ENCODE measurements at regions of chr4 and their contacts with region 1.

Region 1: DNA sequence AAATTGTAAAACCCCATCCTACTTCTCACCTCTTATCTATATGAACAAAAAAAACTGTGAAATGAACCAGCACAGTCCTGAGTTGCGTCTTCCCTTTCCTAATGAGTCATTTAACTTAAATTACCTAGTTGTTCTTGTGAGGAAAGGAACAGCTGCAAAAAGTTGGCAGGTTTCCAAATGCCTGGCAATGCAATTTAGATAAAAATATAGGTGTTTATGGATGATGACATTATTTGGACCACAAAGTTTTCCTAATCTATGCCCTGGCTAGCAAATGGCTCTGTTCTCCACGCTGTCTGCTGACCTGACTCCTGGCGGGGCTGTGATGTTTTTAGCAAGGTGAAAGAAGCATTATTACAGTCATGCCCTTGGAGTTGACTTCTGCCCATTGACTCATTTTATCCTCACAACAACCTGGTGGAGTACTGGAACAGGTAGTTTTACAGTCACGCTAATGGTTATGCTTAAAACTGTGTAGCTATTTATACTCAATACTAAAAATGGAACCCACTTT is 29.8 kb upstream of the RELL1 start:
- DNase-seq: peak; percentile 74
- H3K4me3 ChIP-seq: no peak overlapping the region
- H3K27ac ChIP-seq: no peak overlapping the region
- H3K4me1 ChIP-seq: peaks cover 31% of the 10 kb centered on the region
- H3K27me3 ChIP-seq: no peaks in the 10 kb centered on the region
- CTCF ChIP-seq: peak in 1 of 2 donors; percentile 1

Region 2: DNA sequence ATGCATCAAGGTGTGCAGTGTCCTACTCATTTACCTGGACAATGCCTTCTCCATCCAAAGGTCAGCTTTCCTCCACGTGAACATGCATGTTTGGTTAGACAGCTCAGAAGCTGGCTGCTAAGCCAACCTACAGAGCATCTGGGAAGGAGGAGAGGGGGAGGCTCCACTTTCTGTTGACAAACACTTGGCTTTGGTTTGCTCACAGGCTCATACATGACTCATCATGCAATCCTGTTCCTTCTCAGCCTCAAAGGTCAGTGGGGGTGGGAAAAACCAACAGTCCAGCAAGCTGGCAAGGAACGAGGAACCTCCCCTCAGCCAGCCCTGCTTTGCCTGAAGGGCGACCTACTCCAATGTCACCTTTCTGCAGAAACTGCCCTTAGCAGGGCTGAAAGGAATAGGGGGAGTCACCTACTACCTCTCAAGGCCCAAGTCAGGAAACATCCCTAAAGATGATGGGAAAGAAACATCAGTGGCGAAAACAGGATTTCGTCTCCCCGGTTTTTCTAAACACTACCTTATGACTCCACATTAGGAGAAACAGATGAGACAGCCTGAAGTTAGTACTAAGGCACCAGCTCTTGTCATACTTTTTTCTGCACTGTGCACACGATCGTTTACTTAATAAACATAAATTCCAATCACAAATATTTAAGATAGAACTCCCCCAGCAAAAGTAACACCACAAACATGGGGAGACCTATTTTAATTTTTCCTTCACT is 67.7 kb before region 1 on chr4:
- CTCF ChIA-PET with region 1: no interaction called
- dilution Hi-C with region 1: no loop called
- in situ Hi-C with region 1: no loop called
- intact Hi-C with region 1: no loop called
- DNase-seq: peak; percentile 87
- H3K4me3 ChIP-seq: no peak overlapping the region
- H3K27ac ChIP-seq: no peak overlapping the region
- H3K4me1 ChIP-seq: peaks cover 13% of the 10 kb centered on the region
- H3K27me3 ChIP-seq: no peaks in the 10 kb centered on the region
- CTCF ChIP-seq: no peak

Region 3: GRCh38 chr4:37762294-37762990 is 46.5 kb after region 1 on chr4:
- CTCF ChIA-PET with region 1: no interaction called
- dilution Hi-C with region 1: no loop called
- in situ Hi-C with region 1: no loop called
- intact Hi-C with region 1: loop called (anchors 2 kb)
- DNase-seq: peak; percentile 79
- H3K4me3 ChIP-seq: no peak overlapping the region
- H3K27ac ChIP-seq: peak overlapping the region; percentile 61
- H3K4me1 ChIP-seq: peaks cover 13% of the 10 kb centered on the region
- H3K27me3 ChIP-seq: no peaks in the 10 kb centered on the region
- CTCF ChIP-seq: no peak

Measured in mammary epithelial cell (primary cell).